ENCODE measurements at regions of chr14 and their contacts with region 1.

Region 1: DNA sequence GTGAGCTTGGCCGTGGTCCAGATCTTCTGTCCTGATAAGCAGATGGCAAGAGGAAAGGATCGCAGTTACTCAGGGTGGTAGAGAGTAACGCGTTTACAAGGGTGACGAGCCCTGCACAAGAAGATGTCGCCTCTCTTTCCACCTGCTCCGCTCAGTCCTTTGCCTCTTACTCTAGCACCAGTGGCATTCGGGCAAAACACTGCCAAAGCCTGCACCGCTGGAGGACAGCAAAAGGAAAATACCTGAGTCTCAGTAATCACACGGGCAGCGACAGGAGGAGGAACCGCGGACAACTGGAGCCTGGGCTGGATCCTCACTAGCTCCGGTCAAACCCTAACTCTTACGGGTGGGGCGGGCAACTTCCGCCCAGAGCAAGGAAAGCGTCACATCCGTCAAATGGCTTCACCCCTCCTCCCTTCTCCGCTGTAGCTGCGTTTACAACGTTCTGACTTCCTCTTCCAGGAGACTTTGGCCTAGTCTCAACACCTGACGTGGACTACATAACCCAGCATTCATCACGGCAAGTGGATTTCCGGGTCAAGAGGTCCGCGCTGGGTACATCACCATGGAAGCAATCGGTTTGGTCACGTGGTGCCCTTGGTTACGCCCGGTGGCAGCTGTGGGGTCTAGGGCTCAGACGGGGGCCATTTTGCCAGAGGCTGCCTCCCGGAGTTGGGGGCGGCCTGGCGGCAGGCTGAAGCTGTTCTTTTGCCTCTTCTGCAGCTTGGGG is at the starts of genes KLHL28 and TOGARAM1:
- DNase-seq: peak; percentile 97 to 100 (median 98)

Region 2: DNA sequence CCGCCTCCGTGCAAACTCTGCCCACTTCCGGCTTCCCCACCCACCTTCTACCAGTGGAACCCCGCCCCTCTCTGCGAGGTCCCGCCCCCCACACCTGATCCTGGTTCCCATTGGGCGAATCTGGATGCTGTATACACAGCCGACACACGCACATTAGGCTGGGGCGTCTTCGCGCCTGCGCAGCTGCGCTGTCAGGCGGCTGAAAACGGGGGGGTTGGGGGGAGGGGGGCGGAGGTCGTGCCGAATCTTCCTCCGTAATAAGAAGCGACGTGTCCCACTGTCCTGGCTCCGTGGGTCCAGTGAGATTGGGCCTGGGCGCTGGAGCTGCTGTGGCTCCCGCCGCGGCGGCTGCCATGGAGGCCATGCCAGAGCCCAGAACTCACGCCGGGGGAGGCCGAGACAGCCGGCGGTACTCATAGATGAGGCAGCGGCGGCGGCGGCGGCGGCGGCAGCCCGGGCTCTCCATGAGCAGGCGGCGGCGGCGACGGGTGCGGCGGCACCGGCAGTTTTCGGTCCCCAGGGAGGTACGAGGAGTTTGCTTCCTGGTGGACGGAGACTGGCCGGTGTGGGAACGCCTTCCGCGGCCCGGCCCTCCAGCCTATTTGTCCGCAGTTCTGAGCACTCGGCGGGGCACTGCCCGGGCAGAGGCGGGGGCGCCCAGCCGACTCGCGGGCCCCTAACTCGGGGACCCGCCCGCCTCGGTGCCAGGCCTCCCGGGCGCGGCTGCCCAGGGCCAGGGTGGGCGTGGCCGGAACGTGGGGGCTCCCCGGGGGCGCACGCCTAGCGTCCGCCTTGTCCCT is 64.5 kb before region 1 on chr14:
- intact Hi-C with region 1: loop called (anchors 5 kb)
- DNase-seq: peak; percentile 96 to 99 (median 98)

Region 3: GRCh38 chr14:44912041-44912869 is 49.5 kb before region 1 on chr14:
- intact Hi-C with region 1: loop called (anchors 1 kb)
- DNase-seq: peak in 2 of 10 donors; percentile 74 to 80

Region 4: DNA sequence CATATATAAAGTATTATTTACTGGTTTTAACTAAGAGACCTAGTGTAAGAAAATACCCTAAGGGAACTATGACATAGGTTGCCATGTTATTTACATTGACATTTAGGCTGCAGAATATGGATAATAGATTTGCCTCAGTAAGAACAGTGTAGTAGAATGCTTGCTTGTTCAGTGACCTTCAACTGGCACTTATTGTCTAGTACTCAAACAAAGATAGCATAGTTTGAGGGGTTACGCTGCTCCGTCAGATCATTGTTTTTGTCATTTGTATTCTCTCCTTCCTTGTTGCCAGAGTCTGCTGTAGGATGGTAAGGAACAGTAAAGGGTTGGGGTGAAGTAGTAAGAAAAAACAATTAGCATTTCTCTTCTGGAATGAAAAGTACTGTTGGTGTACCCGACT is 33.4 kb after region 1 on chr14:
- intact Hi-C with region 1: loop called (anchors 5 kb)
- DNase-seq: no peak

Region 5: DNA sequence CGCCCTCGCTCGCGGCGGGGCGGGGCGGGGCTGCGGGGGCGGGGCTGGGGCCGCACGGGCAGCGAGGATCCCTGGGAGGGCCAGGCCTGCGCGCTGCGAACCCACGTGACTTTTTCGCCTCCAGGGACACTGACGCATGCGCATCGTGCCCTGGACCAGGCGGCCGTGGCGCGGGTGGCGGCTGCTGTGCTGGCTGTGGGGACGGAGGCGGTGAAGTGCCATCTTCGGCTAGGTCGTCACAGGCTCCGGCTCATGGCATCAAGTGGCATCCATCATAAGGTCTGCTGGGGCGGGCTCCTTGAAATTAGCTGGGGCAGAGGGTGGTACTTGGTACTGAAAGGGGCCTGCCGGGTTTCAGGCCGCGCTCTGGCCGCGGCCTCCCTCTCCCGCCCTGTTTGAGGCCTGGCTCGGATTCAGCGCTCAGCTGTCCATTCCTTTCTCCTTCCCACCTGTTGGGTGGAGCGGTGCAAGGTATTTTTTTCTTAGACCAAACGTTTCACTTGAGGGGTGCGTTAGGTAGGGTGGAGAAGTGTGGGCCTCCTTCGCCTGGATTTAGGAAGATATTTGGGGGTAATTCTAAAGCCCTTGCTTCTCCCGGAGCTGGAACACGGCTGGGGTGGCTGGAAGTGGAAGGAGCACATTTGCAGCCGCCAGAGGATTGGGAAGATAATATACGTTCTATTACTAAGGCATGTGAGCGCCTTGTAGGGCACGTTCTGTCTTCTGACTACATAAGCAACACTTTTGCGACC is 122.4 kb after region 1 on chr14 and contains the start of gene PRPF39:
- intact Hi-C with region 1: loop called (anchors 1 kb)
- DNase-seq: peak; percentile 87 to 99 (median 94)

Region 6: DNA sequence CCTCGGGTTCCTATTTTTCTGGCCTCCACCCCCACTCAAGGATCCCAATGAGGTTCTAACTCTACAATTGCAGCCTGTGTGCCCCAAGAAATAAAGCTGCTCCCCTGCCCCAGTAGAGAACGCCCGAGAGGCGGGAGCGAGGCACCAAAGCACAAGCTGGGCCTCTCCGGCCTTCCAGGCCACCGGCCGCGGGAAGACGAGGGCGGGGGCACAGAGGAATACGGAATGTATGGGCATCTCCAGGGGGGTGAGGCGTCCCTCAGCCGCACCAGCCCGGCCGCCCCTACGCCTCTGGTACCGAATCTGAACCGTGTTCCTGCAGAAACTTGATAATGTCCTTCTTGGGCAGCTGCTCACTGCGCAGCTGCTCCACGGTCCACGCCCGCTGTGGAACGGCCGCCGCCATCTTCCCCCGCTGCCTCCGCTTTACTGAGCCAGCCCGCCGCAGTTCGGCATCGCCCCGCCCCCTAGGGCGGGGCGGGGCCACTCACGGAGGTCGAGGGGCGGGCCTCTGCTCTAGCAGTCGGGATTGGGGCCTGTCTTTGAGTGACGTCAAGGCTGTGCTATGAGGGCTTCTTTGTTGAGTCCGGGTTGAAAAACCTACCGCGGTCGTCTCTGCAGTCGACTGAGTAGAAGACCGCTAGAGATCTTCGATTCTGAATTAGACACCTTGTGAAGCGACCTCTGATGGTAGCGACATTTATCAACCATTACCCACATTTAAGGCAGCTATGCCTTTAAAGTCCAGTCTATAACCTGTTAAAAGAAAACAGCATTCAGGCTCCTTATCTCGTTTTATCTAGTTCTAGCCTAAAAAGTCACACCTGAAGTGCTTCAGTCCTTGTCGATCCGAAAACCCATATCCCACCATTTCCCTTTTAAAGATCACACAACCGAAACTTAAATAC is 172.5 kb after region 1 on chr14 and contains the start of gene FKBP3:
- intact Hi-C with region 1: loop called (anchors 1 kb)
- DNase-seq: peak; percentile 94 to 99 (median 96)

Region 7: DNA sequence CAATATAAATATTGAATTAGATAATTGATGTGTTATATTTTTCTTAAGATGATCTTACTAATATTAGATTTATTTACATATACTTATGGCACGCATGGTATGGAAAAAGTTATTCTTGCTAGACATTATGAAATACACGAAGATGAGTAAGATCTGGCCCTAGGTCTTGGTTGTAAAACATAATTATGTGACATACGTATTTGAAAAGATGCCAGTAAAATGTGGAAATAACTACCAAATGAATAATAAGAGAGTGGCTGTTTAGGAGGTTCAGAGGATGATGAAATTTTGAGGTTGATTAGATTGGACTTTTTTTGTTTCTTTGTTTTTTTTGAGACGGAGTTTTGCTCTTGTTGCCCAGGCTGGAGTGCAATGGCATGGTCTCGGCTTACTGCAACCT is 215.3 kb after region 1 on chr14:
- intact Hi-C with region 1: no loop called
- DNase-seq: no peak